Colonic mucosa (tissue), 4 donors: ENCODE measurements at regions of chr19 and their contacts with region 1.

Region 1: DNA sequence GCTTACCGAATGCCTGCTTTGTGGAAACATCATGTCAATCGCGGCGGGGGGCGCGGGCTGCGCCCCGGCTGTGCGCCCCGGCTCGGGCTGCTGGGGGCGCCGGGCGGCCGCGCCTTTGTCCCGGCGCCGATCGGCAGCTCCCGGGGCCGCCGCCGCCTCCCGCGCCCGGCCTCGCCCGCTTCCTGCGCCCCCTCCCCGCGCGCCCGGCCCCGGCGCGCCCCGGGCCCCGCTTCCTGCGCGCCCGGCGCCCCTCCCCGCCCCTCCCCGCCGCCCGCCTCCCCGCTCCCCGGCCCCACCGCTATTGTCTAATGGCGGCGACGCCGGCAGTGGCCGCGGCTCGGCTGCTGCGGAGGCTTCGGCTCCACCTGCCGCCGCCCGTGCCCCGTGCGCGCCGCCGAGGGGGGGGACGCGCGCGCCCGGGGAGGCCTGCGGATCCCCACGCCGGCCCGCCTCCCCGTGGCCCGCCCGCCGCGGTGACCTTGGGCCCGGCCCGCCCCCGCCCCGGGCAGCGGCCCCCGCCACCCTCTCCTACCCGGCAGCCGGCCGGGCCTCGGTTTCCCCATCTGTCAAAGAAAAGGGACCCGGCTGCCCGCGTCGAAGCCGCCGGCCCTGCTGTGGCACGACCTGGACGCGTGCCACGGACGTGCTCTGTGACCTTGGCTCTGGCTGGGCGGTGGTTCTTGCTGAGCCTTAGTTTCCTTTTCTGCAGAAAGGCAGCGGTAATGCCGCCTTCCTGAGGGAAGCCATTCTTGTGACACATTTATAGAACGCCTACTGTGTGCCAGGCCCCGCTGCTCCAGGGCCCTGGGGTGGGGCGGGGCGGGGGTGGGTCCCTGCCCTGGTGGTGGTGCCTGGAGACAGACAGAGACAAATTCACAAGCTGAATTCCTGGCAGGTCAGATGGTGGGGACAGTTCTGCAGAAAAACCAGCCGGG is at the start of gene TLE5:
- DNase-seq: peak; percentile 70
- H3K4me3 ChIP-seq: peak within 1 kb of the TSS; percentile 46
- H3K27ac ChIP-seq: peak within 1 kb of the TSS; percentile 92
- H3K4me1 ChIP-seq: no peaks in the 10 kb centered on the region
- H3K27me3 ChIP-seq: no peaks in the 10 kb centered on the region
- CTCF ChIP-seq: no peak
- total RNA-seq, gene TLE5: 407 to 409 TPM

Region 2: GRCh38 chr19:2494444-2495129 is 567.8 kb before region 1 on chr19:
- intact Hi-C with region 1: no loop called
- DNase-seq: peak; percentile 76
- H3K4me3 ChIP-seq: peak overlapping the region; percentile 63
- H3K27ac ChIP-seq: peak overlapping the region; percentile 82
- H3K4me1 ChIP-seq: peaks cover 25% of the 10 kb centered on the region
- H3K27me3 ChIP-seq: peaks cover under 1% of the 10 kb centered on the region
- CTCF ChIP-seq: no peak

Region 3: DNA sequence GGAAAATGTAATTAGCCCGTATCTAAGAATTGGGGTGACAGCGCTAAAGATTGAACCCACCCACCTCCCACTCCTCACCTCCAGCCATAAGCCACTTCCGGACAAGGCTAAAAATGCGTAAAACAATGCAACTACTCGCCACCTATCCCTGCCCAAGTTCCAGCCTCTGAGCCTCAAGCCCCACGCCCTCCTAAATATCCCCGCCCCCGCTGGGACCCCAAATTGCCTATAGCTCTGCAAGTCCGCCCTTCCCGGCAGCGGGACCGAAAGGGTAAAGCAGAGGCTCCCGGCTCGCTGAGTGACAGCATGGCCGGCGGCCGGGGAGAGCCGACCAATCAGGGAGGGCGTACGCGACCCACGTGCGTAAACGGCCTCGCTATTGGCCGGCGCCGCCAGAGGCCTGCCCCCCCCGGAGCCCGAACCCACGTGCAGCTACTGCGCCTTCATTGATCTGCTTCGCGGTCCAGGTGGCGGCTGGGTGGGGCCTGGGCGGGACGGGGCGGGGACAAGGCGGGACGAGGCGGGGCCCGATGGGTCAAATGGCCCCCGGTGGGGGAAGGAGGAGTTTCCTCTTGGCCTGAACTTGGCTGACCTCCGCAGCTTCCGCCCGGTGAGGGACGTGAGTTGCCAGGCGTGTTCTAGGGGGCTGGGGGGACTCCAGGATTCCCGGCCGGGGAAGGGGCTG is 85.3 kb before region 1 on chr19 and contains the start of gene TLE6:
- intact Hi-C with region 1: loop called (anchors 5 kb)
- DNase-seq: peak; percentile 96
- H3K4me3 ChIP-seq: peak within 1 kb of the TSS; percentile 27
- H3K27ac ChIP-seq: no peak within 1 kb of the TSS
- H3K4me1 ChIP-seq: peaks cover 5% of the 10 kb centered on the region
- H3K27me3 ChIP-seq: no peaks in the 10 kb centered on the region
- CTCF ChIP-seq: no peak
- total RNA-seq, gene TLE6: 2.9 to 3.8 TPM

Region 4: GRCh38 chr19:3125900-3126524 is 63.6 kb after region 1 on chr19:
- intact Hi-C with region 1: no loop called
- DNase-seq: peak; percentile 88
- H3K4me3 ChIP-seq: no peak overlapping the region
- H3K27ac ChIP-seq: no peak overlapping the region
- H3K4me1 ChIP-seq: no peaks in the 10 kb centered on the region
- H3K27me3 ChIP-seq: no peaks in the 10 kb centered on the region
- CTCF ChIP-seq: peak; percentile 74

Region 5: DNA sequence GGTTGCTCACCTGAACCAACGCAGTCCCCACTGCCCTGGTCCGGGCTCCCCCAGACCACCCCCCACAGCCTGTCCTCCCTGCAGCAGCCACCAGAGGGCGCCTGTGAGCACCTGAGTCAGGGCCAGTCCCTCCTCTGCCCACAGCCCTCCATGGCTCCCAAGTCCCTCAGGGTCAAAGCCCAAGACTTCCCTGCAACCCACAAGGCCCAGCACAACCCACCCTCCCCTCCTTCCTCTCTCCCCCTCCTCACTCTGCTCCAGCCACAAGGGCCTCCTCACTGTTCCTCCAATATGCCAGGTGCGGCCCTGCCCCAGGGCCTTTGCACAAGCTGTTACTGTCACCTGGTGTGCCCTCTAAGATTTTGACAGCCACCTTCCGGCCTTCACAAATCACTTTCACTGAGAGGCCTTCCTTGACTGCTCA is 84.3 kb after region 1 on chr19:
- intact Hi-C with region 1: no loop called
- DNase-seq: peak; percentile 43
- H3K4me3 ChIP-seq: no peak overlapping the region
- H3K27ac ChIP-seq: no peak overlapping the region
- H3K4me1 ChIP-seq: no peaks in the 10 kb centered on the region
- H3K27me3 ChIP-seq: no peaks in the 10 kb centered on the region
- CTCF ChIP-seq: peak; percentile 65